ENCODE measurements at regions of chr14 and their contacts with region 1.

Region 1: DNA sequence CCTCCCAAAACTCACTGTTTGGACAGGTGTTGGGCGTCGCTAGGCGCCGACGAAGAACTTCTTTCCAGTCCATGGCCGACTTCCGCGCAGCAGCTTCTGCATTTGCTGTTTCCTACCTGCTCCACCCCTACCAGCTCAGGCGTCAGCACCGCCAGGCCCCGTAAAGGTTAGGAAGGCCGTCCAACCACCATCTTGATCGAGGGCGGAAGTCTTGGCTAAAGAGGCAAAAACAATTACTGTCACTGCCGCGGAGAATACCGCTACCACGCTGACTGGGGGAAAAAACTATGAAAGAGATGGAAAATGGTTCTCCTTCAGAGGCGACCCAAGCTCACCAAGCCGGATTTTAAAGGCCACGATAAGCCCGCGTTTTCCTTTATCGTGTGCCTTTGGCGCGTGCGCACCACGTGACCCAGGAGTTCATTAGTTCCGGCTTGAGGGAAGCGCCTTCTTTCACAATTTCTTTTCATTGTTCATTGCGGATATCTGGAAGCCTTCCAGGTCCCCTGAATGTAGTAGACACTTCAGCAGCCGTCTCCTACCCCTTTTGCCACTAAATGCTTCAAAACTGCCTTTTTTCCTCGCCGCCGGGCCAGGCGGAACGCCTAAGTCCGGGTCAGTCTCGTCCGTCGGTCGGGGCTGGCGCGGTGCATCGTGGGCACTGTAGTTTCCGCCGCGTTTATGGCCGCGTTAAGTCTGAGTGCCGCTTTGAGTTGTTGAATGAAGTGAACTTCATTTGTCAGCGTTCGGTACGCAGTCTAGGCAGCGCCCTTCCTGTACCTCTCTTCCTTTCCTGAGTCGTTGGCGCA is at the starts of genes PPP2R3C and PRORP:
- DNase-seq: peak; percentile 97
- H3K4me3 ChIP-seq: peak within 1 kb of the TSS; percentile 85
- H3K27ac ChIP-seq: peak within 1 kb of the TSS; percentile 81
- H3K4me1 ChIP-seq: peaks cover 38% of the 10 kb centered on the region
- CTCF ChIP-seq: no peak
- total RNA-seq, gene PPP2R3C: 50.8 and 59.4 TPM in 2 replicates
- total RNA-seq, gene PRORP: 38.7 and 52.2 TPM in 2 replicates

Region 2: GRCh38 chr14:34875031-34875922 is 246.8 kb before region 1 on chr14 and contains the start of gene BAZ1A:
- CTCF ChIA-PET with region 1: no interaction called
- POLR2A ChIA-PET with region 1: interaction called, 5 read pairs
- intact Hi-C with region 1: loop called (anchors 1 kb)
- DNase-seq: peak; percentile 82
- H3K4me3 ChIP-seq: peak within 1 kb of the TSS; percentile 99
- H3K27ac ChIP-seq: peak within 1 kb of the TSS; percentile 95
- H3K4me1 ChIP-seq: peaks cover 22% of the 10 kb centered on the region
- CTCF ChIP-seq: no peak
- total RNA-seq, gene BAZ1A: 39.6 and 42.2 TPM in 2 replicates

Region 3: DNA sequence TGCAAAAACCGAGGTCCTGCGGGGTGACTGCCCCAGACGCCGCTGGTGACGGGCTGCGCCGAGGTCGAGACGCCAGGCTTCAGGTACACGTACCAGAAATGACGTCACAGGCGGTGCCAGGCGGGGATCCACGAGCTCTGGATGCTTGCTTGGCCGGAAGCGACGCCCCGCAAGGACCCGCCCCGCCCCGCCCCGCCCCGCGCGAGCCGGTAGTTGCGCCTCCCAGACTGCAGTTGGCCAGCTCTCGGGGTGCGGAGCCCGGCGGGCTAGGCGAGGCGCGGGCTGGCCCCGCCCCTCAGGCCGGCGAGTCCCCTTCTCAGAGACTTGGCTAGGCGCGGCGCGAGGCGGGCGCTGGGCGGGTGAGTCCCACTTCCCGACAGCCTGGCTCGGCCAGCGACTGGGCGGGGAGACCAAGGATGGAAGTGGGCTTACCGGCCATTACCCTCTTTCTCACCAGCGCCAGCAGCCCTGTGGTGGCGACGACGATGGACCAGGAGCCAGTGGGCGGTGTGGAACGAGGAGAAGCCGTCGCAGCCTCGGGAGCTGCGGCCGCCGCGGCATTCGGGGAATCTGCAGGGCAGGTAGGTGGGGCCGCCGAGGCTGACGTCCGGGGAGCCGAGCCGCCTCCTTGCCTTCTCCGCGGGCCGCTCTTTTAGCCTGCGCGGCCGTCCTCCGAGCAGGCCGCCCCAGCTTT is 75.9 kb before region 1 on chr14 and contains the start of gene FAM177A1:
- CTCF ChIA-PET with region 1: no interaction called
- POLR2A ChIA-PET with region 1: interaction called, 19 read pairs
- intact Hi-C with region 1: loop called (anchors 1 kb)
- DNase-seq: peak; percentile 97
- H3K4me3 ChIP-seq: peak within 1 kb of the TSS; percentile 89
- H3K27ac ChIP-seq: peak within 1 kb of the TSS; percentile 57
- H3K4me1 ChIP-seq: peaks cover 18% of the 10 kb centered on the region
- CTCF ChIP-seq: no peak
- total RNA-seq, gene FAM177A1: 17.3 and 19.0 TPM in 2 replicates

Region 4: GRCh38 chr14:35292051-35292769 is 170.1 kb after region 1 on chr14 and contains the start of gene PSMA6:
- CTCF ChIA-PET with region 1: interaction called, 3 read pairs
- POLR2A ChIA-PET with region 1: interaction called, 4 read pairs
- intact Hi-C with region 1: loop called (anchors 1 kb)
- DNase-seq: peak; percentile 100
- H3K4me3 ChIP-seq: peak within 1 kb of the TSS; percentile 96
- H3K27ac ChIP-seq: peak within 1 kb of the TSS; percentile 99
- H3K4me1 ChIP-seq: peaks cover 69% of the 10 kb centered on the region
- CTCF ChIP-seq: no peak
- total RNA-seq, gene PSMA6: 208 and 216 TPM in 2 replicates

Measured in OCI-LY7 (cell line).